ENCODE measurements at regions of chr16 and their contacts with region 1.

Region 1: DNA sequence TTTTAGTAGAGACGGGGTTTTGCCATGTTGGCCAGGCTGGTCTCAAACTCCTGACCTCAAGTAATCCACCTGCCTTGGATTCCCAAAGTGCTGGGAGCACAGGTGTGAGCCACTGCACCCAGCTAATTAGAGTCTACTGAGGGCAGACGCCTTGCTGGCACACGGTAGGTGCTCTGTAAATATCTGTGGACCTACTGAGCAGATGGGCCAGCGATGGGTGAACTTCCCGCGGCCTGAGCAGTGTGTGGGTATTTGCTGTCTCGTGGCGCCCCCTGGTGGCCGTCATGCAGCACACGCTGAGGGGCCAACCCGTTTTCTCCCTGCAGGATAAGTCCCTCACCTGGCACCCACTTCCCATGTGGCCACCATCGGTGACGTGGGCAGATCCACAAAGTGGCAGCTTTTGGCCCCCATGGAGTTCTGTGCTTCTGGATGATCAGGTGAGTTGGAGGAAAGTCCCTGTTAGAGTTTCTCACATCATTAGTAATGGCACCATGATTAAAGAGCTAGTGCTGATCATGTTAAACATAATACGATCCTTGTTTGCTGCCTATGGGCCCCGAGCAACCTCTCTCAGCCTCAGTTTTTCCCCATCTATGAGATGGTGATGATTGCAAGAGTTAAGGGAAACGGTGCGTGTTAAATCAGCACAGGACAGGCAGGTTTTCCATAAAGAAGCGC is 40.7 kb downstream of the ZDHHC7 start:
- DNase-seq: peak; percentile 77
- ATAC-seq: peak; percentile 99
- H3K4me3 ChIP-seq: no peak overlapping the region
- H3K27ac ChIP-seq: no peak overlapping the region
- H3K4me1 ChIP-seq: peaks cover 0 to 16% of the 10 kb centered on the region in 2 experiments; a peak in 2 of 4 replicates
- H3K27me3 ChIP-seq: no peaks in the 10 kb centered on the region
- CTCF ChIP-seq: peak; percentile 95 to 99 (median 98)
- POLR2A ChIP-seq: no peak
- RAD21 ChIP-seq: peak; percentile 100

Region 2: DNA sequence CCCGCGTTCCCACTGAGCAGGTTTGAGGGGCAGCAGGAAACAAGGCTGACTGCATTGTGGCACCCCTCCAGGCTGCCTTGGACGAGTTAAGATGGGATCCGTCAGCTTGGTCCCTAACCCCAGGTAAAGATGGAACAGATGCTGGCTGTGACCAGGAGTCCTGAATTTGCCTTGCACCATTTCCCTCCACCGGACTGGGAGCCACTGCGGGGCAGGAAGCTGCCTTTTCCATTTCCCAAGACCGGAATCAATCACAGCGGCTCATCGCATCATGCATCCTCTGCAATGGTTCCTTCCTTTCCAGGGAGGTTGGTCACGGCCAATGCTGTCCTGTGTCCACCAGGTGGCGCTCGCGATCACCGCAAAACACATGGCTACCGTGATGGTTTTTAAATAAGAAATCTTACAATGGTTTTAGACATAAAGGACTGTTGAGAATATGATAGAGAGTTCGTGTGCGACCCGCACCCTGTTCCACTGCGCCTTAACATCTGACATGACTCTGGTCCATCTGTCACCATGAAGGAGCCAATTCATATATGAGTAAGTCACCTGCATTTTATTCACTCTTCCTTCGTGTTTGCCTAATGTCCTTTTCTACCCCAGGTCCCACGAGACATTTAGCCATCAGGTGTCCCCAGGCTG is 459.3 kb before region 1 on chr16:
- CTCF ChIA-PET with region 1: interaction called, 6 read pairs
- POLR2A ChIA-PET with region 1: no interaction called
- RAD21 ChIA-PET with region 1: no interaction called
- intact Hi-C with region 1: loop called (anchors 1 kb)
- DNase-seq: peak; percentile 72
- ATAC-seq: peak; percentile 85
- H3K4me3 ChIP-seq: peak overlapping the region; percentile 12 to 13; a peak in 2 of 4 replicates
- H3K27ac ChIP-seq: no peak overlapping the region
- H3K4me1 ChIP-seq: peaks cover under 1 to 24% of the 10 kb centered on the region in 2 experiments
- H3K27me3 ChIP-seq: no peaks in the 10 kb centered on the region
- CTCF ChIP-seq: peak in 2 of 3 experiments; percentile 99 to 100; a peak in 4 of 6 replicates
- POLR2A ChIP-seq: no peak
- RAD21 ChIP-seq: no peak

Region 3: GRCh38 chr16:84672276-84673202 is 298.0 kb before region 1 on chr16:
- CTCF ChIA-PET with region 1: interaction called, 6 read pairs
- POLR2A ChIA-PET with region 1: no interaction called
- RAD21 ChIA-PET with region 1: interaction called in 1 of 2 experiments, 3 read pairs
- intact Hi-C with region 1: loop called (anchors 1 kb)
- DNase-seq: peak; percentile 48
- ATAC-seq: peak; percentile 96
- H3K4me3 ChIP-seq: no peak overlapping the region
- H3K27ac ChIP-seq: no peak overlapping the region
- H3K4me1 ChIP-seq: peaks cover 0 to 5% of the 10 kb centered on the region in 2 experiments; a peak in 1 of 4 replicates
- H3K27me3 ChIP-seq: peaks cover 13% of the 10 kb centered on the region; the same call in 1 of the 2 replicates
- CTCF ChIP-seq: peak; percentile 85 to 97 (median 95)
- POLR2A ChIP-seq: no peak
- RAD21 ChIP-seq: peak; percentile 72

Region 4: DNA sequence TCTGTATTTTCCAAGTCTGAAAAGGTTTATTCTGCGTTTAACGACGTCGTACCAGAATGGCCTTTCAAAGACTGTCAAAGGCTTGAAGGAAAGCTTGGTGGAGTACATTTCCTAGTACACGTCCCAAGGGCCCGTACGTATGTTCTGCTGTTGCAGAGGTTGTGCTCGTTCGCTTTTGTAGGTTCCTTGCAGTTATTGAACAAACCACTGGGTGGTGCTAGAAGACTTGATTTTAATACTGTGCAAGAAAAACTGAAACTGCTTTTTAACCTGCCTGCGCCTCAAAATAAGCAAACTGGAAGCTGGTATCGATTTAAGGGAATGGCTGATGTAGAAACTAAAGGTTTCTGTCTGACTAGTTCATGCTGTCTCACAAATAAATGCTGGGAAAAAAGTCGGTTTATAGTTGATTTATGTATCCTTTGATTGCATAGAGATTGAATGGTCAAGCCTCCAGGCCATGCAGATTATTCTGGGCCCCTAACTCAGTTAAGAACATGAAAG is 216.2 kb before region 1 on chr16:
- CTCF ChIA-PET with region 1: interaction called, 32 read pairs
- POLR2A ChIA-PET with region 1: interaction called, 3 read pairs
- RAD21 ChIA-PET with region 1: interaction called, 3 to 9 read pairs
- intact Hi-C with region 1: loop called (anchors 1 kb)
- DNase-seq: peak; percentile 79
- ATAC-seq: peak; percentile 86
- H3K4me3 ChIP-seq: no peak overlapping the region
- H3K27ac ChIP-seq: no peak overlapping the region
- H3K4me1 ChIP-seq: peaks cover 0 to 13% of the 10 kb centered on the region in 2 experiments; a peak in 1 of 4 replicates
- H3K27me3 ChIP-seq: no peaks in the 10 kb centered on the region
- CTCF ChIP-seq: peak; percentile 82 to 97 (median 86)
- POLR2A ChIP-seq: no peak
- RAD21 ChIP-seq: peak; percentile 90

Region 5: DNA sequence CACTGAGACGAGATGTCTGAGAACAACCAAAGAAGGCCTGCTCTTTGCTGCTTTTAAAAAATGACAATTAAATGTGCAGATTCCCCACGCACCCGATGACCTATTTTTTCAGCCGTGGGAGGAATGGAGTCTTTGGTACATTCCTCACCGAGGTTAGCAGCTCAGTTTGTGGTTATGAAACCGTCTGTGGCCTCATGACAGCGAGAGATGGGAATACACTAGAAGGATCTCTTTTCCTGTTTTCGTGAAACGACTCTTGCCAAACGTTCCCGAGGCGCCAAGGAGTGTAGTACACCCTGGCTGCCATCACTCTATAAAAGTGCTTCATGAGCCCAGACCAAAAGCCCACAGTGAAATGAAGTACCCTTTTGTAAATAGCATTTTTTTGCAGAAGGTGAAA is 63.0 kb before region 1 on chr16:
- CTCF ChIA-PET with region 1: no interaction called
- POLR2A ChIA-PET with region 1: no interaction called
- RAD21 ChIA-PET with region 1: no interaction called
- intact Hi-C with region 1: no loop called
- DNase-seq: no peak
- ATAC-seq: no peak
- H3K4me3 ChIP-seq: no peak overlapping the region
- H3K27ac ChIP-seq: no peak overlapping the region
- H3K4me1 ChIP-seq: no peaks in the 10 kb centered on the region
- H3K27me3 ChIP-seq: peaks cover 8% of the 10 kb centered on the region; the same call in 1 of the 2 replicates
- CTCF ChIP-seq: no peak
- POLR2A ChIP-seq: no peak
- RAD21 ChIP-seq: no peak

Region 6: DNA sequence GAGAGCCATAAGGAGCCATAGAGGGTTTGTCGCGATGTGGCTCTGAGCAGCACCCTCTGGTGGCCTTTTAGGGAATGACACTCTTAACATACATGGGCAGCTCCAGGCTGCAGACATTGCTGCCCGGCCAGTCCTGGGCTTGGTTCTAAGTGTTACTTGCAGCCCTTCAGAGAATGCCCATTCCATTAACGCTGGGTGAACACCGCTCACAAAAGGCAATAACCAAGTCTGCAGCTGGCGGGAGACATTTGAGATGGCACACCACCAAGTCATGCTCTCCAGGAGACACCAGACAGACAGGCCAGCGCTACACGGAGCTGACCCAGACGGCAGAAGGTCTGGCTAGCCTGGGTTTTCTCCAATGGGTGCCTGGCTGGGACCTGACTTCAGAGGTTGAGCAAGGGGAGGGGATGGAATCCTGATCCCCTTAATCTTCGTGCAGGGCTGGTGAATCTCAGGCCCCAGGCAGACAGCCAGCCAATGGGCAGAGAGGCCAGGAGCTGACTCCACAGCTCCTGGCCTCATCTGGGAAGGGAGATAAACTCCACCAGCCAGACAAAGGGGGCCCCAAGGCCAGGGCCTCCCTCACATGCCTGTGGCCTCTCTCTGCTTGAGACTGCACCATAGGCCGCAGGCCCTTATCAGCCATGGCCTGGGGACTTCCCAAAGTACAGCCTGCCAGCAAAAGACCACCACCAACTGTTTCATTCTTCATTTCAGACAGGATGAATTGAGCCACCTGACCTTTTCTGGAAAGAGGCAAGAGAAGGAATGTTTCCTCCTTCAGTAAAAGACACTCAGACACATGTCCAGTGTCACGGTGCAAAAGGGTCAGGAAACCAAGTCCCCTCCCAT is 18.0 kb before region 1 on chr16:
- CTCF ChIA-PET with region 1: interaction called, 11 read pairs
- POLR2A ChIA-PET with region 1: no interaction called
- RAD21 ChIA-PET with region 1: no interaction called
- intact Hi-C with region 1: no loop called
- DNase-seq: peak; percentile 76
- ATAC-seq: peak; percentile 94
- H3K4me3 ChIP-seq: no peak overlapping the region
- H3K27ac ChIP-seq: no peak overlapping the region
- H3K4me1 ChIP-seq: peaks cover 0 to 3% of the 10 kb centered on the region in 2 experiments; a peak in 1 of 4 replicates
- H3K27me3 ChIP-seq: no peaks in the 10 kb centered on the region
- CTCF ChIP-seq: peak; percentile 93 to 96 (median 95)
- POLR2A ChIP-seq: no peak
- RAD21 ChIP-seq: peak; percentile 87

Region 7: DNA sequence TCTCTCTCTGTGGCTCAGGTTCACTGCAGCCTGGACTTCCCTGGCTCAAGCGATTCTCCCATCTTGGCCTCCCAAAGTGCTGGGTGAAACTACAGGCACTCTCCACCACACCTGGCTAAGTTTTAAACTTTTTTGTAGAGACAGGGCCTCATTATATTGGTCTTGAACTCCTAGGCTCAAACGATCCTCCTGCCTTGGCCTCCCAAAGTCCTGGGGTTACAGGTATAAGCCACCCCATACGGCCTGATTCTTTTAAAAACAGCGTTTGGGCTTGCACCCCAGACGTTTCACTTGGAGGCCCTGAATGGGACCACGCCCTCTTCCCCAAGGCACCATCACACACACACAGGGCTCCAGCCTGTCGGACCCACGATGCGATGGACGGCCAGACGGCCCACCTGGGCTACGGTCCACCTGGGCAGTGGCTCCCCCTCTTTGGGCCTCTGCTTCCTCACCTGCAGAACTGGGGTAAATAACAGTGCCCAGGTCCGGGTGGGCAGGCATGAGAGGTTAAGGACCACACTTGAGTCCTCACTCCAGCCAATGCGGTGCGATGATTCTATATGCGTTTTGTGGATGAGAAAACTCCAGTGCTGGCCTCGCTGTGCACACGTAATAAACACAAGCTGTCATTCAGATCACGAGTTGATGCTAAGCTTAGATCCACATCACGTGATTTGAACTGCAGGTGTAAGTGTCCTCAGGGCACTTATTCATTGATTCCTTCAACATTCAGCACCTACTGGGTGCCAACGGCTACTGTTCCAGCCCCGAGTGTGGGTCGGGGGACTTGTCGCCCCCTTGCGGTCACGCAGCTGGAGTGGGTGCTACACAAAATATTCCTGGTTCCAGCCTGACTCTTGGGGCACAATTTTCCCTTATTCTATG is 747.8 kb after region 1 on chr16:
- CTCF ChIA-PET with region 1: no interaction called
- POLR2A ChIA-PET with region 1: no interaction called
- RAD21 ChIA-PET with region 1: no interaction called
- intact Hi-C with region 1: no loop called
- DNase-seq: no peak
- ATAC-seq: peak; percentile 33
- H3K4me3 ChIP-seq: no peak overlapping the region
- H3K27ac ChIP-seq: no peak overlapping the region
- H3K4me1 ChIP-seq: peaks cover 22 to 40% of the 10 kb centered on the region in 2 experiments
- H3K27me3 ChIP-seq: no peaks in the 10 kb centered on the region
- CTCF ChIP-seq: peak; percentile 47 to 78 (median 73); a peak in 5 of 6 replicates
- POLR2A ChIP-seq: no peak
- RAD21 ChIP-seq: peak; percentile 38; the same call in 1 of the 2 replicates